Stomach (tissue), 19 donors: ENCODE measurements at regions of chr14 and their contacts with region 1.

Region 1: GRCh38 chr14:52473557-52473956 is 78.7 kb downstream of the TXNDC16 start:
- DNase-seq: peak in 1 of 2 donors; percentile 69
- H3K4me3 ChIP-seq: no peak overlapping the region
- H3K27ac ChIP-seq: no peak overlapping the region
- H3K4me1 ChIP-seq: no peaks in the 10 kb centered on the region
- H3K27me3 ChIP-seq: no peaks in the 10 kb centered on the region
- CTCF ChIP-seq: peak in 3 of 7 experiments; percentile 23 to 49 (median 33)
- EP300 ChIP-seq: no peak
- POLR2A ChIP-seq: no peak

Region 2: GRCh38 chr14:52131640-52132320 is 341.8 kb before region 1 on chr14:
- intact Hi-C with region 1: no loop called
- DNase-seq: peak; percentile 49 to 96
- H3K4me3 ChIP-seq: no peak overlapping the region
- H3K27ac ChIP-seq: peak overlapping the region in 1 of 5 donors; percentile 3
- H3K4me1 ChIP-seq: peaks cover 0 to 17% (median 7%) of the 10 kb centered on the region in 4 donors
- H3K27me3 ChIP-seq: no peaks in the 10 kb centered on the region
- CTCF ChIP-seq: peak in 4 of 7 experiments; percentile 24 to 53 (median 41)
- EP300 ChIP-seq: no peak
- POLR2A ChIP-seq: no peak

Region 3: GRCh38 chr14:52299692-52300278 is 173.8 kb before region 1 on chr14:
- intact Hi-C with region 1: loop called (anchors 5 kb)
- DNase-seq: peak in 1 of 2 donors; percentile 76
- H3K4me3 ChIP-seq: no peak overlapping the region
- H3K27ac ChIP-seq: no peak overlapping the region
- H3K4me1 ChIP-seq: peaks cover 0 to 8% (median 4%) of the 10 kb centered on the region in 4 donors
- H3K27me3 ChIP-seq: no peaks in the 10 kb centered on the region
- CTCF ChIP-seq: peak in 5 of 7 experiments; percentile 21 to 68 (median 50)
- EP300 ChIP-seq: no peak
- POLR2A ChIP-seq: no peak

Region 4: DNA sequence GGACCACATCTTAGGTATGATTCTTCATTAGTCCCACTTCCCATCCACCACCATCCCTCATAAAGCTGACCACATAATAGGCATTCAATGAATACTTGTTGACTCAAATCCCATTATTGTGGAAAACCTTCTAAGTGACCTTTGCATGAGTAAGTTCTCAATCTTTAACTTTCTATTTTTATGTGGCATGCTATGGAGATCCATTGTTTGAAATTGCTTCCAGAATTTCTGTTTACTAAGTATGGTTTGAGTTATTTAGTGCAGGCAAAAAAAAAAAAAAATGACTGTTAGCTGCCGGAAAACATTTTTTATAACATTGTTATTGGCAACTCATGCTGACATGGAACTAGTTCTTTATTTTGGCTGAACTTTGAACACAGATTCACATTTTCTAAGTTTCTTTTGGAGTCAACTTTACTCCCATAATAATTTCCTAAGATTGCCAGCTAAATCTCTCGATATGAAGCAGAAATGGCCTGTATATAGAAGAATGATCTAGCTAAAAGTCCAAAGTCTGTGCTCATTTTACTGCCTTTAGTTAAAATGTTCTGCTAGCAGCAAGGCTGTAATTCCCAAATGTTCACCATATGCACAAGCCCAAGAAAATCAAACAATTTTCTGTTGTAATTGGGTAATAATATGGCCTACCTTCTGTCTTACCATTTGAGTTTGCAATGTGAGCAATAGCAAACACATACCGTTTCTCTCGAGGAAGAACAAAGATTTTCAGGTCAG is 81.5 kb before region 1 on chr14:
- intact Hi-C with region 1: no loop called
- DNase-seq: no peak
- H3K4me3 ChIP-seq: no peak overlapping the region
- H3K27ac ChIP-seq: no peak overlapping the region
- H3K4me1 ChIP-seq: no peaks in the 10 kb centered on the region
- H3K27me3 ChIP-seq: no peaks in the 10 kb centered on the region
- CTCF ChIP-seq: no peak
- EP300 ChIP-seq: no peak
- POLR2A ChIP-seq: no peak